ENCODE measurements at regions of chr1 and their contacts with region 1.

Region 1: DNA sequence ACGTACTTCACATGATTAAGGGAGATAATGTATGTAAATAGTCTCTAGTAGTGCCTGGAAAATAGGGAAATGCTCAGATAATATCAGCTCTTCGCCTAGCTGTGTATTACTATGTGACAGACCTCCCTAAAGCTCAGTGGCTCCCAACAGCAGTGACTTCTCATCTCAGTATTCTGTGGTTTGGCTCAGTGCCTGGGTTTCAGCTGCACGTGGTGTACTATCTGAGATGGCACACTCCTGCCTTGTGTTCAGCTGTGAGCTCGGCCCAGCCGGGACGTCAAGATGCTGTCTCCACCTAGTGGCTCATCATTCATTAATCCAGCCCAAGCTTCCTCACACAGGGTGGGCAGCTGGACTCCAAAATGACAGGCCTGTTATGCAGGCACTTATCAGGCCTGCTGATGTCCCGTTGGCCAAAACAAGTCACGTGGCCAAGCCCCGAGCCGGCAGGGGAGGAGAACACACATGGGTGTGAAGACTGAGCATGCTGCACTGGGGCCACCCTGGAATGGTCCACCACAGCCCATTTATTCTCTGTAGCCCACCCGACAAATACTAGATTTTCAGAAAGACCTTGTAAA is 17.8 kb downstream of the SLFNL1 start:
- DNase-seq: peak; percentile 93 to 96
- H3K4me3 ChIP-seq: no peak overlapping the region
- H3K27ac ChIP-seq: no peak overlapping the region
- H3K4me1 ChIP-seq: peaks cover 13% of the 10 kb centered on the region
- H3K27me3 ChIP-seq: no peaks in the 10 kb centered on the region
- CTCF ChIP-seq: peak; percentile 62

Region 2: DNA sequence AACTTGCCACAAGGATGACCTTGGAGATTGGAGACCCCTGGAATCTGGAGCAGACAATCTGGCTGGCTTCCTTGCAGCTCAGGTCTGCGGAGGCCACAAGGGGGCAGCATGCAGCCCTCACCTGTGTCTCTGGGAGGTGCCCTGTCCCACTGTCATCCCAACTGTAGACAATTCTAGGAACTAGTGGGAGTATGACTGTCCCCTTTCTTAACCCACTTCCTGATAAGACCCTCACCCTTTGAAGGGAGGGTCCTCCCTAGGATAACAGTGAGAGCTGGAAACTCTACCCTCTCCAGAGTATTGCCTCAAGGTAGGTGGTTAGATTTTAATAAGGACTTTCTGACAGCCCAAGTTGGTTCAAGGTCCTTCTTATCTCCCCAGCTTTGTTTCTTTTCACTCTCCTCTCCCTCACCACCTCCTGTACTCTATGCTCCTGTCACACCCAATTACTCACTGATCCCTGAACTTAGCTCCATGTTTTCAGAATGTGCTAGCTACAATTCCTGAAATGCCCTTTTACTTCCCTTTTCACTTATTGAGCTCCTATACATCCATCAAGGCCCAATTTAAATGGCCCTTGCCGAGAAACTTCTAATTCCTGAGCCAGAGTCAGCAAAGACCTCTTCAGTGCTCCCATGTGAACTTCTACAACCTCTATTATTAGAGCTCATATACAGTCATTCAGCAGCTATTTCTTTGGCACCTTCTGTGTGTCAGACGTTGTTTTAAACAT is 229.3 kb before region 1 on chr1:
- CTCF ChIA-PET with region 1: no interaction called
- POLR2A ChIA-PET with region 1: no interaction called
- intact Hi-C with region 1: loop called (anchors 1 kb)
- DNase-seq: peak; percentile 38 to 68
- H3K4me3 ChIP-seq: no peak overlapping the region
- H3K27ac ChIP-seq: no peak overlapping the region
- H3K4me1 ChIP-seq: no peaks in the 10 kb centered on the region
- H3K27me3 ChIP-seq: no peaks in the 10 kb centered on the region
- CTCF ChIP-seq: peak; percentile 87

Region 3: DNA sequence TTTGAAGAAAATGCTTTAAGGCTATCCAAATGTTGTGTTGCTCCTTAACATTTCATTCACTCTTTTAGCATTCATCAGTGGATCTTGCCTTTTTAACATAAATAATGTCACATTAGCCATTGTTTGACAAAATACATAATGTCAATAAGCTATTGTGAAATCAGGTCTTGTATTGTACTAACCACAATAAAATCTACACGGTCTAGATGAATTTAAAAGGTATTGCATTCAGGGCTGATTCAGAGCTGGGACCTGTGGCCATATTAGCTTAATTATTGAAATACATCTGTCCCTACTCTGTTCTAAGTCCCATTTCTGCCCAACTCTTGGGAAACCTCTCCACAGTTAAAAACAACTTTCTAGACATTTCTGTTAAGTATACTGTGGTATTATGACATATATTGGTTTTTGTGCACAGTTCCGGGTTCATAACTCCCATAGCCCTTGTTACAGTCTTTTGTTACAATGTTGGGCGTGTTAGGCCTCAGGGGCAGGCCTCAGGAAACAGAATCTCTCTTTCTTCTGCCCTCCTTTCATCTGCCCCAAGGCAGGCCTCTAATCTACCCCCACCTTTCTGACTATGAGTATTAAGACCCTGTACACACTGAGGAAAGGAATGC is 96.8 kb before region 1 on chr1:
- CTCF ChIA-PET with region 1: no interaction called
- POLR2A ChIA-PET with region 1: interaction called, 17 read pairs
- intact Hi-C with region 1: no loop called
- DNase-seq: peak; percentile 15 to 84
- H3K4me3 ChIP-seq: no peak overlapping the region
- H3K27ac ChIP-seq: peak overlapping the region; percentile 83
- H3K4me1 ChIP-seq: peaks cover 52% of the 10 kb centered on the region
- H3K27me3 ChIP-seq: no peaks in the 10 kb centered on the region
- CTCF ChIP-seq: no peak

Region 4: GRCh38 chr1:40985161-40985560 is 18.6 kb before region 1 on chr1:
- CTCF ChIA-PET with region 1: interaction called, 11 read pairs
- POLR2A ChIA-PET with region 1: interaction called, 12 read pairs
- intact Hi-C with region 1: no loop called
- DNase-seq: no peak
- H3K4me3 ChIP-seq: no peak overlapping the region
- H3K27ac ChIP-seq: no peak overlapping the region
- H3K4me1 ChIP-seq: peaks cover 16% of the 10 kb centered on the region
- H3K27me3 ChIP-seq: no peaks in the 10 kb centered on the region
- CTCF ChIP-seq: no peak

Region 5: GRCh38 chr1:42949312-42950145 is 1945.8 kb after region 1 on chr1:
- CTCF ChIA-PET with region 1: no interaction called
- POLR2A ChIA-PET with region 1: interaction called, 14 read pairs
- intact Hi-C with region 1: no loop called
- DNase-seq: peak; percentile 56 to 69
- H3K4me3 ChIP-seq: peak overlapping the region; percentile 24; the same call in 1 of the 2 replicates
- H3K27ac ChIP-seq: peak overlapping the region; percentile 64
- H3K4me1 ChIP-seq: peaks cover 95% of the 10 kb centered on the region
- H3K27me3 ChIP-seq: no peaks in the 10 kb centered on the region
- CTCF ChIP-seq: no peak

Measured in PC-9 (cell line).